ENCODE measurements at regions of chr17 and their contacts with region 1.

Region 1: DNA sequence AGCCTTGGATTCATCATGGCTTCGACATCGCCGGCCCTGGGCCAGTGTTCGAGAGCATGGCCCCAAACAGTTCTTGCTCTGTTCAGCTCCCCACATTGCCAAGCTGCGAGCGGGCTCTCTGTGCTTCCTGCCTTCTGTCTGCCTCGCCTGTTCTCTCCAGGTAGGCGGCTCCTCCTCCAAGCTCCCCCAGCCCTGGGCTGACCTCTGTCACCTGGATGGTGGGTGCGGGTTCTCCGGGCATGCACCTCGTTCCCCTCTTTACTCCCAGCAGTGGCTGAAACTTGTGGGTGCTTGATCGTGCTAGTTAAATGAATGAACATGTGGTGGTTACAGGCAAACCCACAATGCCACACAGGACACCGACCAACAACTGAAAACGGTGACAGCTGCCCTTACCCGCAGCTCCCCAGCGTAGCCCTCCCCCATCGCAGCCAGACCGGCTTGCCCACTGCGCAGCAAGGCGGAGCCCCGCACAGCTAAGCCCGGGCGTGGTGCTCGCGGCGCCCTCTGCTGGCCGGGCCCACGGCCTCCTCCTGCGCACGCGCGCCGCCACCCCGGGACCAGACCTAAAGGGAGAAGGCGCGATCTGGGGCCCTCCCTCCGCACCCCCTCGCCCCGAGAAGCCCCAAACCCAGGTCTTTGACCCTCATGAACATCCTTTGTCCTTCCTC is 23.0 kb upstream of the EIF1 start:
- DNase-seq: peak; percentile 90
- ATAC-seq: peak; percentile 82
- H3K4me3 Mint-ChIP-seq: peak overlapping the region; percentile 85
- H3K27ac Mint-ChIP-seq: peak overlapping the region; percentile 94
- H3K4me1 Mint-ChIP-seq: peaks cover 16% of the 10 kb centered on the region
- H3K27me3 Mint-ChIP-seq: peaks cover 17% of the 10 kb centered on the region
- CTCF ChIP-seq: peak; percentile 71

Region 2: GRCh38 chr17:41329281-41329948 is 336.3 kb before region 1 on chr17:
- CTCF ChIA-PET with region 1: interaction called, 10 read pairs
- POLR2A ChIA-PET with region 1: no interaction called
- DNase-seq: peak; percentile 76
- ATAC-seq: peak; percentile 90
- H3K4me3 Mint-ChIP-seq: no peak overlapping the region
- H3K27ac Mint-ChIP-seq: no peak overlapping the region
- H3K4me1 Mint-ChIP-seq: no peaks in the 10 kb centered on the region
- H3K27me3 Mint-ChIP-seq: no peaks in the 10 kb centered on the region
- CTCF ChIP-seq: peak; percentile 86

Region 3: GRCh38 chr17:41521574-41522261 is 144.0 kb before region 1 on chr17:
- CTCF ChIA-PET with region 1: interaction called, 23 read pairs
- POLR2A ChIA-PET with region 1: no interaction called
- DNase-seq: peak; percentile 57
- ATAC-seq: peak; percentile 46
- H3K4me3 Mint-ChIP-seq: no peak overlapping the region
- H3K27ac Mint-ChIP-seq: peak overlapping the region; percentile 48; the same call in 1 of the 2 replicates
- H3K4me1 Mint-ChIP-seq: peaks cover 25% of the 10 kb centered on the region
- H3K27me3 Mint-ChIP-seq: no peaks in the 10 kb centered on the region; the same call in 1 of the 2 replicates
- CTCF ChIP-seq: no peak

Region 4: DNA sequence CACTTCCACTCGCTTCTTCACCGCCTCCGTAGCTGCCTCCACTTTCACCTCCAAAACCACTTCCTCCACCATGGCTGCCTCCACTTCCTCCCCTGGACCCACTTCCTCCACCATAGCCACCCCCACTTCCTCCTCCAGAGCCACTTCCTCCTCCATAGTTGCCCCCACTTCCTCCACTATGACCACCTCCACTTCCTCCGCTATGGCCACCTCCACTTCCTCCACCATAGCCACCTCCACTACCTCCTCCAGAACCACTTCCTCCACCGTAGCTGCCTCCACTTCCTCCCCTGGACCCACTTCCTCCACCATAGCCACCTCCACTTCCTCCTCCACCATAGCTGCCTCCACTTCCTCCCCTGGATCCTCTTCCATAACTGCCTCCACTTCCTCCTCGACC is 98.4 kb before region 1 on chr17:
- CTCF ChIA-PET with region 1: interaction called, 29 read pairs
- POLR2A ChIA-PET with region 1: no interaction called
- DNase-seq: no peak
- ATAC-seq: no peak
- H3K4me3 Mint-ChIP-seq: no peak overlapping the region
- H3K27ac Mint-ChIP-seq: no peak overlapping the region
- H3K4me1 Mint-ChIP-seq: no peaks in the 10 kb centered on the region
- H3K27me3 Mint-ChIP-seq: peaks cover 22% of the 10 kb centered on the region
- CTCF ChIP-seq: no peak

Region 5: DNA sequence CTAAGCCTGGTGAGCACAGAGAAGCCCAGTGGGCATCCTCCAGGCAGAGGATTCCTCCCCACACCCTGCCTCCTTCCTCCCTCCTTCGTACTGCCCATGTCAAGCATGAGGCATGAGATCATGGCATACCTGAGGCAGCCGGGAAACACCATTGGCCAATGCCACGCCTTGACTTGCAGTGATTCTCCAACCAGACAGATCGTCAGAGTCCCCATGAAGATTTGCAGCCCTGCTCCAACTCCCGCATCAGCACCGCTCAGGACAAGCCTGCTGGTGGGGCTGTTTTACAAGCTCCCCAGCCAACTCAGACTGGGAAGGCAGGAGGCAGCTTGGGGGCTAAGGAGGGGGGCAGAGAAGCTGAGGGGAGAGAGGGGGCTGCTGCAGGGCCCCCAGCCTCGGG is 50.2 kb before region 1 on chr17:
- CTCF ChIA-PET with region 1: interaction called, 18 read pairs
- POLR2A ChIA-PET with region 1: no interaction called
- DNase-seq: no peak
- ATAC-seq: peak; percentile 65
- H3K4me3 Mint-ChIP-seq: no peak overlapping the region
- H3K27ac Mint-ChIP-seq: no peak overlapping the region
- H3K4me1 Mint-ChIP-seq: peaks cover 10% of the 10 kb centered on the region; the same call in 1 of the 2 replicates
- H3K27me3 Mint-ChIP-seq: no peaks in the 10 kb centered on the region
- CTCF ChIP-seq: no peak

Region 6: GRCh38 chr17:41678907-41679739 is 13.4 kb after region 1 on chr17:
- CTCF ChIA-PET with region 1: interaction called, 43 read pairs
- POLR2A ChIA-PET with region 1: no interaction called
- DNase-seq: no peak
- ATAC-seq: peak; percentile 48
- H3K4me3 Mint-ChIP-seq: no peak overlapping the region
- H3K27ac Mint-ChIP-seq: peak overlapping the region; percentile 50; the same call in 1 of the 2 replicates
- H3K4me1 Mint-ChIP-seq: peaks cover 50% of the 10 kb centered on the region
- H3K27me3 Mint-ChIP-seq: peaks cover 2% of the 10 kb centered on the region; the same call in 1 of the 2 replicates
- CTCF ChIP-seq: no peak

Measured in WTC11 (cell line).